ENCODE measurements at regions of chr6 and their contacts with region 1.

Region 1: GRCh38 chr6:37314487-37315156 is 39.2 kb upstream of the RNF8 start:
- DNase-seq: peak; percentile 56
- H3K4me3 Mint-ChIP-seq: no peak overlapping the region
- H3K27ac Mint-ChIP-seq: no peak overlapping the region
- H3K4me1 Mint-ChIP-seq: peaks cover 10% of the 10 kb centered on the region
- H3K27me3 Mint-ChIP-seq: no peaks in the 10 kb centered on the region

Region 2: GRCh38 chr6:37222125-37222967 is 92.3 kb before region 1 on chr6:
- CTCF ChIA-PET with region 1: interaction called, 11 read pairs
- POLR2A ChIA-PET with region 1: no interaction called
- DNase-seq: peak; percentile 79
- H3K4me3 Mint-ChIP-seq: peak overlapping the region; percentile 77
- H3K27ac Mint-ChIP-seq: no peak overlapping the region
- H3K4me1 Mint-ChIP-seq: peaks cover 26% of the 10 kb centered on the region
- H3K27me3 Mint-ChIP-seq: no peaks in the 10 kb centered on the region

Region 3: GRCh38 chr6:37303932-37304363 is 10.7 kb before region 1 on chr6:
- CTCF ChIA-PET with region 1: interaction called, 17 read pairs
- POLR2A ChIA-PET with region 1: no interaction called
- DNase-seq: no peak
- H3K4me3 Mint-ChIP-seq: no peak overlapping the region
- H3K27ac Mint-ChIP-seq: no peak overlapping the region
- H3K4me1 Mint-ChIP-seq: peaks cover 5% of the 10 kb centered on the region
- H3K27me3 Mint-ChIP-seq: no peaks in the 10 kb centered on the region